ENCODE measurements at regions of chr7 and their contacts with region 1.

Region 1: GRCh38 chr7:33904681-33905388 is 504 bp upstream of the BMPER start:
- DNase-seq: peak; percentile 38
- ATAC-seq: peak; percentile 63
- H3K4me3 Mint-ChIP-seq: peak overlapping the region; percentile 59
- H3K27ac Mint-ChIP-seq: no peak overlapping the region
- H3K4me1 Mint-ChIP-seq: peaks cover 9% of the 10 kb centered on the region
- H3K27me3 Mint-ChIP-seq: peaks cover 57% of the 10 kb centered on the region

Region 2: GRCh38 chr7:34069630-34070270 is 164.9 kb after region 1 on chr7:
- CTCF ChIA-PET with region 1: no interaction called
- POLR2A ChIA-PET with region 1: no interaction called
- intact Hi-C with region 1: no loop called
- DNase-seq: no peak
- ATAC-seq: peak; percentile 69
- H3K4me3 Mint-ChIP-seq: no peak overlapping the region
- H3K27ac Mint-ChIP-seq: no peak overlapping the region
- H3K4me1 Mint-ChIP-seq: no peaks in the 10 kb centered on the region
- H3K27me3 Mint-ChIP-seq: peaks cover 3% of the 10 kb centered on the region

Region 3: DNA sequence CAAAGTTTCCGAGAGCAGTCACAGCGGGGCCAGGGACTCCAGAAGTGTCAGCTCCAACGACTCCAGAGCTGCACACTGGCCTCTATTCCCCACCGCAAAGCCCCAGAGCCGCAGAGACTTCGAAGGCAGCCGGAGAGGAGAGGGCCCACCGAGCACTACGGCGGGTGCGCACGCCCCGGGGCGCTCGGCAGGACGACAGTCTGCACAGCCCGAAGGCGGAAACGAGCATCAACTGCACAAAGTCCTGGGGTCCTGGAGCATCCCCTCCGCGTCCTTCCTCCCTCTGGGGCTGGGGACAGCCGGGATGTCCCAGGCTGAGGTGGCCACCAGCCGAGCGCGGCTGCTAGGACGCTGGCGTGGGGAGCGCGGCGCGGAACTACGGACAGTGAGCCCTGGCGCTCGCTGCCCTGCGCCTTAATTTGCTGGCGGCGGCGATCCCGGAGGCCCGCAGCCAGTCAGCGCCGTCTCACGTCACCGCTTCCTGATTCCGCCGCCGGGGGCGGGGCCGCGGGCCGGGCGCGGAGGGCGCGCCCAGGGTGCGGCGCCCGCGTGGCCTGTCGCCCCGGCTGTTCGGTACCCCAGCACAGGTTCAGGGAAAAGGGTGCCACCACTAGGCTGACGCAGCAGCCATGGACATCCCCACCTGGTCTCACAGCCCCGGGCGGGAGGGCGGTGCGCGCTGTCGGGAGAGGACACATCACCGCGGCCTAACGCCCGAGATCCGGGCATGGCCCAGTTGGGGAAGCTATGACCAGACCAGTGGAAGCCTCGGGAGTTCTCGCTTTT is 1349.1 kb after region 1 on chr7 and contains the start of gene TBX20:
- CTCF ChIA-PET with region 1: no interaction called
- POLR2A ChIA-PET with region 1: no interaction called
- intact Hi-C with region 1: loop called in 1 of 2 experiments (anchors 10 kb)
- DNase-seq: peak; percentile 65
- ATAC-seq: peak; percentile 82
- H3K4me3 Mint-ChIP-seq: peak within 1 kb of the TSS; percentile 51
- H3K27ac Mint-ChIP-seq: no peak within 1 kb of the TSS
- H3K4me1 Mint-ChIP-seq: peaks cover 16% of the 10 kb centered on the region
- H3K27me3 Mint-ChIP-seq: peaks cover 84% of the 10 kb centered on the region
- total RNA-seq, gene TBX20: 0.09 TPM in 1 of 2 experiments, not detected in the other